Ascending aorta (tissue), 2 donors: ENCODE measurements at regions of chr1 and their contacts with region 1.

Region 1: DNA sequence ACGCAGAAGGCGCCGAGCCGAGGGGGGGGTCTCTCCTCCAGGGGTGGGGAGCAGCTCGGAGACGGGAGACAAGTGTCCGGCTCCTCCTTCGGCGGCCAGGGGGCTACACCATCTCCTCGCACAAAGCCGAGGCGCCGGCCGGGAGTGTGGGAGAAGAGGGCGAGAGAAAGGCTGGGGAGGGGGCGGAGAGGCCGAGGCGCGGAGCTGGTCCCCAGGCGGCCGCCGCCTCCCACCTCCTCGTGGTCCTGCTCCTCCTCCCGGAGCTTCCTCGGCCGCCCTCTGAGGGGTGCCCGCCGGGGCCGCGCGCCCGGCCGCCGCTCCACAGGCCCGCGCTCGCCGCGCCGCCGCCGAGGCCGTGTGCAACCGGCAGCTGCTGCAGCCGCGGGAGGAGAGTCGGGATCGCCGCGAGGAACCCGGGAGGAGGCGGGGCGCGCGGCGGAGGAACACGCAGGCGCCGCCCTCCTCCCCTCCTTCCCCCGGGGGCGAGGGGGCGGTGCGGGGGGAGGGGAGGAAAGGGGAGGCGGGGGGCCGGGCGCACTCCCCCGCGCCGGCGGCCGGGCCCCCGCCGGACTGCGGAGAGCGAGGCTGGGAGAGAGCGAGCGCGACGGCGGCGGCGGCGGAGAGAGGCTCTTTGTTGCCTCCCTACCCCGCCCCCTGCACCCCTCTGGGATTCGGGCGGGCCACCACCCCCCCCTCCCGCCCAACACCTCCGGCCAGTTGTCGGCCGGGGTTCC is at the start of gene ENAH:
- DNase-seq: peak in 1 of 2 donors; percentile 89
- H3K4me3 ChIP-seq: peak within 1 kb of the TSS; percentile 58 to 79
- H3K27ac ChIP-seq: peak within 1 kb of the TSS; percentile 99 to 100
- H3K4me1 ChIP-seq: peaks cover 3 to 37% of the 10 kb centered on the region in 2 donors
- H3K27me3 ChIP-seq: no peaks in the 10 kb centered on the region
- CTCF ChIP-seq: no peak
- total RNA-seq, gene ENAH: 103 TPM

Region 2: GRCh38 chr1:225508538-225509375 is 144.1 kb before region 1 on chr1:
- intact Hi-C with region 1: loop called (anchors 5 kb)
- DNase-seq: peak in 1 of 2 donors; percentile 82
- H3K4me3 ChIP-seq: no peak overlapping the region
- H3K27ac ChIP-seq: peak overlapping the region; percentile 80 to 82
- H3K4me1 ChIP-seq: peaks cover 0 to 12% of the 10 kb centered on the region in 2 donors
- H3K27me3 ChIP-seq: no peaks in the 10 kb centered on the region
- CTCF ChIP-seq: no peak

Region 3: DNA sequence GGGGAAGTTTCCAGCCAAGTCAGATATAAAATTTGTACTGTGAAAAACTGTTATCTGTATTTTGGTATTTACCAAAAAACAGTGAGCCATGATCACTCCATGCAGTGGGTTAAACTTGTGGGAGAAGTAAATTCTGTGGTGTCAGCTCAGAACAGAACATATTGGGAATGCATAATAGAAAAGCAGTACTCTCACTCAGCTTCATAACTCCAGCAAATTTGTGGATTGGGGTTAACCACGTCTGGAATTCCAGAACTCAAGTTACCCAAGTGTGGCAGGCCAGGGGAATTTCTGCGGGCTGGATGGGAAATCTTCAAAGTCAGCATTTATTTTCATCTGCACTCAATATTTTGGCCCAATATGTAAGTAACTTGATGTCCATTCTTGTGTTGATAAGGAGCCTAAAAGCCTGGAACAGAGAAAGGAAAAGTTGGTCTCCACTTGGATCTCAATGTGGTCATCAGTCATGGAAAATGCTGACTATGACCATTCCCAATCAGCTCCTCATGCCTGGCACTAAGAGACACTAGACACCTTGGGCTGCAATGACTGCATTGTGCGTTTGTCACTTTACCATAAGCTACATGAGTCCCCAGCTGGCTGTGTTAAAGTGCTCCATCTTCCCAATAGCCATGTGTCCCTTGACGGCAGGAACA is 39.1 kb after region 1 on chr1:
- intact Hi-C with region 1: loop called (anchors 2 kb)
- DNase-seq: peak in 1 of 2 donors; percentile 50
- H3K4me3 ChIP-seq: no peak overlapping the region
- H3K27ac ChIP-seq: peak overlapping the region; percentile 79
- H3K4me1 ChIP-seq: peaks cover 16 to 56% of the 10 kb centered on the region in 2 donors
- H3K27me3 ChIP-seq: no peaks in the 10 kb centered on the region
- CTCF ChIP-seq: no peak

Region 4: GRCh38 chr1:225735252-225736149 is 82.6 kb after region 1 on chr1:
- intact Hi-C with region 1: loop called (anchors 1 kb)
- DNase-seq: peak; percentile 77 to 95
- H3K4me3 ChIP-seq: peak overlapping the region in 1 of 2 donors; percentile 27
- H3K27ac ChIP-seq: peak overlapping the region; percentile 69 to 89
- H3K4me1 ChIP-seq: peaks cover 0 to 21% of the 10 kb centered on the region in 2 donors
- H3K27me3 ChIP-seq: no peaks in the 10 kb centered on the region
- CTCF ChIP-seq: no peak

Region 5: DNA sequence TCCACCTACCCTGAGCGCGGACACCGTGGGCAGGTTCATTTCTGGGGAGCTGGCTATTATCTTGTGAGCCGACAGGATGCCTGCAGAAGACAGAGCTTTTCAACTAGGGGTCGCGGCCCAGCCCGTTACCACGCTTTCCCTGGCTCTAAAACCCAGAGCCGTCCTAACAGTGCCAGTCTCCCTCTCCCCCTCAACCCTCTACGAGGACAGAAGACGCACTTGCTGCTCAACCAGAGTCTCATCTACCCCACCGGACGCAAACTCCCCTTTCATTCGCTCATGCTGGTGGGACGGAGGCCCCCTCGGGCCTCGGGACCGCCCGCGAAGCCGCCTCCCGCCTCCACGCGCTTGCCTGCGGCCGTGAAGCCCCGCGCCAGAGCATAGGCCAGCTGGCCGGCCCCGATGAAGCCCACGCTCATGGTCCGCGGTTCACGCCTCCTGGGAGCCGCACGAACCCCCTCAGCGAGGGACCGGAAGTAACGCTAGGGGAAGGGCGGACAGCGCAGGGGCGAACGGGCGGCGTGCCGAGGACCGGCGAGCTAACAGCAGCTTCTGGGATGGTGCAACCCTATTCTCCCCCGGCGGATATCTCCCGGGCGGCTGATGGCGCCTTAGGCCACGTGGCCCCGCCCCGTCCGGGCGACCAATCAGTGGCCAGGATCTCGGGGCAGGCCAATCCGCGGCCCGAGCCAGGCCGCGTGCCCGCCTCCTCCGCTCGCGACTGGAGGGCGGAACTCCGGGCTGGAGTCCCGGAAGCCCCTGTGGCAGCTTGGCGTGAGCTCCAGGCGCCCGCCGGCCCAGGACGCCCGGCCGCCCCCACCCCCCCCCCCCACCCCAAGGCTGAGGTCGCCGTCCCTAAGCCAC is 271.0 kb after region 1 on chr1 and contains the start of gene PYCR2:
- intact Hi-C with region 1: loop called (anchors 10 kb)
- DNase-seq: peak; percentile 87 to 98
- H3K4me3 ChIP-seq: peak within 1 kb of the TSS; percentile 80 to 84
- H3K27ac ChIP-seq: peak within 1 kb of the TSS; percentile 85 to 95
- H3K4me1 ChIP-seq: peaks cover 6 to 19% of the 10 kb centered on the region in 2 donors
- H3K27me3 ChIP-seq: no peaks in the 10 kb centered on the region
- CTCF ChIP-seq: no peak
- total RNA-seq, gene PYCR2: 126 TPM